Activated T-helper 2 cell treated with anti-CD3 and anti-CD28 coated beads, Interferon-gamma antibody, Interleukin-2, Interleukin-4, amounts not matched to agents 10 μg/mL and 5 μg/mL and 100 μg/mL, durations not matched to agents 14 hours and 24 hours and 36 hours (primary cell): ENCODE measurements at regions of chr5 and their contacts with region 1.

Region 1: DNA sequence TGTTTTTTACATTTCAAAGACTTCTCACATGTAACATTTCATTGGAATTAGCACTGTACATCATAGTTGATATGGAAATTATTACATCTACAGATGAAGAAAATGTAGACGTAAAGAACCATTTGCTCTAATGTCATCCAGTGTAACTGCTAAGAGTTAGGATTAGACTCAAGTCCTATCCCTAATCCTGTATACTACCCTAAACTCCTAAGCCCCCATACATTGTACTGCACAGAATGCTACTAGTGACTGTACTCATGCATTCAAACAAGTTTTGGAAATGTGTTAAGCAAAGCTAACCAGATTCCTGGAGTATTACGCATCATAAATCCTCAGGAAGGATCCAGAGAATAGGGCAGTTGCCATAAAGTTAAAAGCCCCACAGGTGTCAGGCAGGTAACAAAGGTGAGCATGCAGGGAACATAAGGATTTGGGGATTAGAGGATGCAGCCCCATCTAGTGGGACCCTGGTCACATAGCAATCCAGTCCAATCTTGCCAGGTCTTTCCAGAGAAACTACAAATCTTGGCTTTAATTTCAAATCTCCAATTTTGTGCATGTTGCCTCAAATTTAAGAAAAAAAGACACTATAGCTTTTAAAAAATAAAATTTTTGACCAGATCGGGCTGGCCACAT is 32.0 kb downstream of the HAVCR1 start:
- DNase-seq: no peak
- H3K4me3 Mint-ChIP-seq: no peak overlapping the region
- H3K27ac Mint-ChIP-seq: peak overlapping the region; percentile 89
- H3K4me1 Mint-ChIP-seq: peaks cover 85% of the 10 kb centered on the region
- H3K27me3 Mint-ChIP-seq: no peaks in the 10 kb centered on the region

Region 2: DNA sequence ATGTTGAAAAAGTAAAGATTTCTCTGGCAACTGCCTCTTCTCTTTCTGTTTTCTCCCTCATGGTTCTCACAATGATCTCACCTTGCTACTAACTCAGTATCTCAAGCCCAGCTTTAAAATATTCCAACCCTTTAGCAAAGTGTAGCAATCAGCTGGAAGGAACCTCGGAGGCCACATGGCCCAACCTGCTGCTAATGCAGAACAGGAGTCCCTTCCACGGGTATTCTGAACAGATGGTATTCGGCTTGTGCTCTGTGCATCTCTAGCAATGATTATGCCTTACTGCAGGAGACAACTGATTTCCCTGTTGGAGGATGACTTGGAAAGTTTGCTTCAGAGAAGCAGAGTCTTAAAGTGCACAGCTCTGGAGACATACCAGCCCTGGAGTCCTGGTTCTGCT is 328.6 kb before region 1 on chr5:
- intact Hi-C with region 1: no loop called
- DNase-seq: no peak
- H3K4me3 Mint-ChIP-seq: no peak overlapping the region
- H3K27ac Mint-ChIP-seq: no peak overlapping the region
- H3K4me1 Mint-ChIP-seq: no peaks in the 10 kb centered on the region
- H3K27me3 Mint-ChIP-seq: peaks cover 2% of the 10 kb centered on the region

Region 3: DNA sequence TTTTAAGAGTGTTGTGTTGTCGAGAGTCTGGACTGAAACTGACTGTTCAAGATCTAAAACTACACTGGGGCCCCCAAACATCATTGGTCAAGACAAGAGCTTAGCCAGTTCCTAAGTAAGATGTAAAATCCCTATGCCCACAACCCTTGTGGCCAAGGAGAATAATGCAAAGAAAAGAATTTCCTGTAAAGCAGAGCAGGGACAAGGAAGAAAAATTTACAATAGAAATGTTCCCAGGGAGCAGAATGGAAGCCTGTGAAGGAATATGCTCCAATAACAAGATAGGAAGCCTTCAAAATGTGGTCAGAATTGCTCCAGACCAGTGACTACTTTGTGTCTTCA is 156.4 kb before region 1 on chr5:
- intact Hi-C with region 1: loop called (anchors 1 kb)
- DNase-seq: no peak
- H3K4me3 Mint-ChIP-seq: no peak overlapping the region
- H3K27ac Mint-ChIP-seq: no peak overlapping the region
- H3K4me1 Mint-ChIP-seq: peaks cover 17% of the 10 kb centered on the region
- H3K27me3 Mint-ChIP-seq: no peaks in the 10 kb centered on the region

Region 4: DNA sequence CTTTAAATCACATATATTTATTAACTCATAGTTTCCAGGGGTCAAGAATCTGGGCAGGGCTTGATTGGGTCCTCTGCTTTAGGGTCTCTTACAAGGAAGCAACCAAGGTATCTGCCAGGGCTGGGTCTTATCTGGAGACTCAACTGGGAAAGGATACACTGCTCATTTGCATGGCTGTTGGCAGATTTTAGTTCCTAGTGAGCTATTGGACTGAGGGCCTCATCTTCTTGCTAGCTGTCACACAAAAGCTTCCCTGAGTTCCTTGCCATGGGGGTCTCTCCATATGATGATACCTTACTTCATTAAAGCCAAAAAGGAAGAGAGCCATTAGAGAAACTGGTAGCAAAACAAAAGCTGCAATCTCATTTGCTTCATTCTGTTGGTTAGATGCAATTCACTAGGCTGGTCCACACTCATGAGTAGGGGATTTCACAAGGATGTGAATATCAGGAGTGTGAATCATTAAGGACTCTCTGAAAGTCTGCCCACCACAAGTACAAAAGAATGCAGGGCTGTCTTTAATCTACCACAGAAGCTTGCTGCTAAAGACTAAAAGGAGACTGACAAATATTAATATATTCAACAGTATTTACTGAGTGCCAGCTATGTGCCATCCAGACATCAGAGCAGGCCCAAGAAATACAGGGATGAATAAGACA is 21.9 kb before region 1 on chr5:
- intact Hi-C with region 1: loop called (anchors 2 kb)
- DNase-seq: no peak
- H3K4me3 Mint-ChIP-seq: no peak overlapping the region
- H3K27ac Mint-ChIP-seq: peak overlapping the region; percentile 62
- H3K4me1 Mint-ChIP-seq: peaks cover 22% of the 10 kb centered on the region
- H3K27me3 Mint-ChIP-seq: no peaks in the 10 kb centered on the region

Region 5: DNA sequence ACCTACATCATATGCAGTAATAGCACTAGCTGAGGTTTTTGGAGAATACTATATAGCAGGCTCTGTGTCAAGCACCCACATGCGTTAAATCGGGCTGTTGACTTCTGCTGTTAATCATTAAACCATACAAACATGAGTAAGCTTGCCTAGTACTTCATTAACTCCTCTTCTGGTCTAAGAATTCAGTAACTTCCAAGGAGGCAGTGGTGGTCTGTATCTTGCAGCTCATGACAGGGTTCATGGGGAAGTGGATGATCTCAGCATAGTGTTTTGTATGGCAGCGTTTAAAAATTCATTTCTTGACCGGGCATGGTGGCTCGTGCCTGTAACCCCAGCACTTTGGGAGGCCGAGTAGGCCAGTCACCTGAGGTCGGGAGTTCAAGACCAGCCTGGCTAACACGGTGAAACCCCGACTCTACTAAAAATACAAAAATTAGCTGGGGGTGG is 32.2 kb after region 1 on chr5 and contains the start of gene HAVCR1:
- intact Hi-C with region 1: no loop called
- DNase-seq: no peak
- H3K4me3 Mint-ChIP-seq: no peak within 1 kb of the TSS
- H3K27ac Mint-ChIP-seq: no peak within 1 kb of the TSS
- H3K4me1 Mint-ChIP-seq: peaks cover 4% of the 10 kb centered on the region
- H3K27me3 Mint-ChIP-seq: no peaks in the 10 kb centered on the region
- total RNA-seq, gene HAVCR1: 0.64 and 1.2 TPM in 2 replicates

Region 6: DNA sequence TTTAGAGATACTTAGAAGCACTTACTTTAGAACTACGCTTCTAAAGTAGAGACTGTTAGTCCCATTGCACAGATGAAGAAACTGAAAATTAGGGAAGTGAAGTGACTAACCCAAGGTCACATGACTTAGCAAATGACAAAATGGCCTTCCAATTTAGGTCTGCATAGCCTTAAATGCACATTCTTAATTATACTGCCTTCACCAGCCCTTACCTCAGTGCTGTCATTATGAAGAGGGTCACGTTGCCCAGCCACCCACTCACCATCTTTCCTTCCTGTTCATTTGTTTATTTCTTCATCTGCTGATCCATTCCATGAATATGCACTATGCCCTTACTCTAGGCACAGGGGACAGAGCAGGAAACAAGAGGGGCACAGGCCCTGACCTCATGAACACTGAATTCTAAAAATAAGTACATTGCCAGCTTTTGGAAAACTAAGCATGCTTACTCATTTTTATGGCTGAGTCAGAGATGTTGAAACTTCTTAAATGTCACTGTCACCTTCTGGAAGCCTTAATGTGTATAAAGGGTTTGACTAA is 73.3 kb after region 1 on chr5:
- intact Hi-C with region 1: loop called (anchors 2 kb)
- DNase-seq: no peak
- H3K4me3 Mint-ChIP-seq: peak overlapping the region; percentile 10
- H3K27ac Mint-ChIP-seq: peak overlapping the region; percentile 94
- H3K4me1 Mint-ChIP-seq: peaks cover 30% of the 10 kb centered on the region
- H3K27me3 Mint-ChIP-seq: no peaks in the 10 kb centered on the region

Region 7: GRCh38 chr5:157142317-157143126 is 115.6 kb after region 1 on chr5 and contains the start of gene MED7:
- intact Hi-C with region 1: loop called (anchors 1 kb)
- DNase-seq: peak; percentile 95
- H3K4me3 Mint-ChIP-seq: peak within 1 kb of the TSS; percentile 97
- H3K27ac Mint-ChIP-seq: peak within 1 kb of the TSS; percentile 97
- H3K4me1 Mint-ChIP-seq: peaks cover 31% of the 10 kb centered on the region
- H3K27me3 Mint-ChIP-seq: no peaks in the 10 kb centered on the region
- total RNA-seq, gene MED7: 12.5 and 13.1 TPM in 2 replicates

Region 8: GRCh38 chr5:157189223-157189622 is 162.3 kb after region 1 on chr5:
- intact Hi-C with region 1: no loop called
- DNase-seq: peak; percentile 6
- H3K4me3 Mint-ChIP-seq: peak overlapping the region; percentile 99
- H3K27ac Mint-ChIP-seq: peak overlapping the region; percentile 88
- H3K4me1 Mint-ChIP-seq: peaks cover 71% of the 10 kb centered on the region
- H3K27me3 Mint-ChIP-seq: no peaks in the 10 kb centered on the region

Region 9: GRCh38 chr5:157265714-157266285 is 238.9 kb after region 1 on chr5 and contains the start of gene CYFIP2:
- intact Hi-C with region 1: loop called (anchors 5 kb)
- DNase-seq: peak; percentile 84
- H3K4me3 Mint-ChIP-seq: peak within 1 kb of the TSS; percentile 89
- H3K27ac Mint-ChIP-seq: peak within 1 kb of the TSS; percentile 95
- H3K4me1 Mint-ChIP-seq: peaks cover 65% of the 10 kb centered on the region
- H3K27me3 Mint-ChIP-seq: no peaks in the 10 kb centered on the region
- total RNA-seq, gene CYFIP2: 171 and 182 TPM in 2 replicates